ENCODE measurements at regions of chr4 and their contacts with region 1.

Region 1: DNA sequence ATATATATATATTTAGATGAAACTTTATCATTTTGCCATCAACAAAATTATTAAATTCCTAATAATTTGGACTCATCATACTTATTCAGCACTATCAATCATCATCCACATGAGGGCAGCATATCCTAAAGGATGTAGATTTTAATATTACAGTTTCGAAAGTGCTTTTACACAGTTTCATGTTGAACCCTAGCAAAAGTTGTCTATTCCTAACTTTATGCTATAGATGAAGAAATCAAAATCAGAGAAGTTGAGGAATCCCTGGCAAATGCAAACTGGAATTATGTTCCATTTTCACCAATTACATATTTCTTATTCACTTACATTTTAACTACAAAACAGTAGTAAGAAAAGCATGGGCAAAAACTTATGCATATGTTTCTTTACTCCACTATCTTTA is 36.6 kb upstream of the UGT2A1 start:
- DNase-seq: peak in 3 of 14 experiments; percentile 49 to 67 (median 56)
- ATAC-seq: peak; percentile 51
- H3K4me3 ChIP-seq: no peak overlapping the region
- H3K4me3 Mint-ChIP-seq: no peak overlapping the region
- H3K27ac ChIP-seq: no peak overlapping the region
- H3K27ac Mint-ChIP-seq: no peak overlapping the region
- H3K4me1 ChIP-seq: no peaks in the 10 kb centered on the region
- H3K4me1 Mint-ChIP-seq: peaks cover 5% of the 10 kb centered on the region
- H3K27me3 ChIP-seq: no peaks in the 10 kb centered on the region
- H3K27me3 Mint-ChIP-seq: no peaks in the 10 kb centered on the region
- CTCF ChIP-seq: peak; percentile 77

Region 2: GRCh38 chr4:69701696-69702095 is 12.1 kb after region 1 on chr4:
- CTCF ChIA-PET with region 1: no interaction called
- POLR2A ChIA-PET with region 1: no interaction called
- intact Hi-C with region 1: no loop called
- DNase-seq: no peak
- ATAC-seq: no peak
- H3K4me3 ChIP-seq: no peak overlapping the region
- H3K4me3 Mint-ChIP-seq: no peak overlapping the region
- H3K27ac ChIP-seq: no peak overlapping the region
- H3K27ac Mint-ChIP-seq: no peak overlapping the region
- H3K4me1 ChIP-seq: no peaks in the 10 kb centered on the region
- H3K4me1 Mint-ChIP-seq: peaks cover 6% of the 10 kb centered on the region
- H3K27me3 ChIP-seq: no peaks in the 10 kb centered on the region
- H3K27me3 Mint-ChIP-seq: no peaks in the 10 kb centered on the region
- CTCF ChIP-seq: no peak

Region 3: GRCh38 chr4:69823481-69824186 is 134.0 kb after region 1 on chr4:
- CTCF ChIA-PET with region 1: interaction called, 5 read pairs
- POLR2A ChIA-PET with region 1: no interaction called
- intact Hi-C with region 1: loop called (anchors 1 kb)
- DNase-seq: peak; percentile 27 to 69 (median 50)
- ATAC-seq: peak; percentile 96
- H3K4me3 ChIP-seq: no peak overlapping the region
- H3K4me3 Mint-ChIP-seq: no peak overlapping the region
- H3K27ac ChIP-seq: no peak overlapping the region
- H3K27ac Mint-ChIP-seq: no peak overlapping the region
- H3K4me1 ChIP-seq: no peaks in the 10 kb centered on the region
- H3K4me1 Mint-ChIP-seq: peaks cover 14% of the 10 kb centered on the region
- H3K27me3 ChIP-seq: no peaks in the 10 kb centered on the region
- H3K27me3 Mint-ChIP-seq: no peaks in the 10 kb centered on the region
- CTCF ChIP-seq: peak; percentile 69

Region 4: GRCh38 chr4:70183168-70183939 is 493.8 kb after region 1 on chr4:
- CTCF ChIA-PET with region 1: no interaction called
- POLR2A ChIA-PET with region 1: no interaction called
- intact Hi-C with region 1: loop called in 1 of 2 experiments (anchors 5 kb)
- DNase-seq: peak in 4 of 14 experiments; percentile 2 to 30 (median 18)
- ATAC-seq: no peak
- H3K4me3 ChIP-seq: no peak overlapping the region
- H3K4me3 Mint-ChIP-seq: no peak overlapping the region
- H3K27ac ChIP-seq: no peak overlapping the region
- H3K27ac Mint-ChIP-seq: no peak overlapping the region
- H3K4me1 ChIP-seq: no peaks in the 10 kb centered on the region
- H3K4me1 Mint-ChIP-seq: no peaks in the 10 kb centered on the region
- H3K27me3 ChIP-seq: no peaks in the 10 kb centered on the region
- H3K27me3 Mint-ChIP-seq: no peaks in the 10 kb centered on the region
- CTCF ChIP-seq: no peak

Region 5: DNA sequence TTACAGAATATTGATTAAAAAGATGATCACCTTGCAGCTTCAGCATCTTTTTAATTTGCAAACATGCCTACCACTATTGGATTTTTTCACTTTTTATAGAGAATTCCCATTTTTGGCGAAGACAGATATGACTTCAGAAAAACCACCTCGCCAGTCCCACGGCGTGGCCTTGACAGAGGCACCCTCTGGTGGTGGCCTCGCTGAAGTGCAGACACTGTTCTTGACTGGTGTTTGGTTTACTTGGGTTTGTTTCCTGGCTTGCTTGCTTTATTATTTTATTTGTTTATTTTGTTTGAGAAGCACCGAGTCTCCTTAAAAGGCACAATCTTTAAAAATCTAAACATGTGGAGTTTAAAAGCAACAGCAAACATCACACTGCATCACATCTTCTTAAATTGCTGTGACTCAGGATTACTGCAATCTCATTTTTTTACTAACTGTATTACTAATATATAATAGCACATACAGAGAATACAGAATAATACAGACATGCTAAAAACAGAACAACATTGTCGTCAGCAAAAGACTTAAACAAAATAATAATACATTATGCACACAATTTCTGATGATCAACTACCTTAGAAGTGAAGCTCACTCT is 815.7 kb after region 1 on chr4:
- CTCF ChIA-PET with region 1: no interaction called
- POLR2A ChIA-PET with region 1: no interaction called
- intact Hi-C with region 1: loop called (anchors 1 to 5 kb)
- DNase-seq: peak; percentile 11 to 60 (median 32)
- ATAC-seq: peak; percentile 57
- H3K4me3 ChIP-seq: no peak overlapping the region
- H3K4me3 Mint-ChIP-seq: no peak overlapping the region
- H3K27ac ChIP-seq: no peak overlapping the region
- H3K27ac Mint-ChIP-seq: no peak overlapping the region
- H3K4me1 ChIP-seq: no peaks in the 10 kb centered on the region
- H3K4me1 Mint-ChIP-seq: no peaks in the 10 kb centered on the region
- H3K27me3 ChIP-seq: peaks cover 0 to 6% of the 10 kb centered on the region in 2 experiments
- H3K27me3 Mint-ChIP-seq: no peaks in the 10 kb centered on the region
- CTCF ChIP-seq: peak; percentile 89